GM10248 (cell line): ENCODE measurements at regions of chr20 and their contacts with region 1.

Region 1: DNA sequence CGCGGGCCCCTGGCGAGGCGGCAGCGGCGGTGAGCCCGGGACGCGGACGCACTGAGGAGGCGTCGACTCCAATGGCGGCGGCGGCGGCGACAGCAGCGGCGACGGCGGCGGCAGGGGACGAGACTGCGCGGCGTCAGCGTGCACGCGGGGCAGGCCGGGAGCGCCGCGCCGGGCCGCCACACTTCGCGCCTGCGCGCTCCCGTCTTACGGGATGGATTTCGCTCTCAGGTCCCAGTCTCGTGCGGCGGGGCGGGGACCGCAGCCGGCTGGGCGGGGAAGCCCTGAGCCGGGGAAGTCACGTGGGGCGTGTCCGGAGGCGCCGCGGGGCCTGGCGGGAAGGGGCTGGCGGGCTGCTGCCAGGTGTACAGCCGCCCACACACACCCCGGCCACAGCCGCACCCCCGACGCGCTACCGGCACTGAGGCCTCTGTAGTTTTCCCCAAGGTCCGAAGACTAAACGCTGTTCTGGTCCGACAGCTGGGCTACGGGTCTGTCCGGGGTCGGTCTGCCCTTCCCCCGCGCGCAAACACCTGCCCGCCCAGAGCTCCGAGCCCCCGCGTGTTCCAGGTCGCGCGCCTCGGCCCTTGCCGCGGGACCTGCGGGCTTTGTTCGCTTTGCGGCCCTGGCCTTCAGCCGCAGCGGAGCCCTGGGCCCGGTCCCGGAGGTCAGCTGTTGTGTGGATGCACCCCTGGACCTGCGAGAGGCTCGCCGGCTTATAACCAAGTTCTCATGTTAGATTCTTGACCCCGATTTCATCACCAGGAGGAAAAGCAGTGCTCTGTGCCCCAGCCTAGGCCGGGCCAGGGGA is at the start of gene YTHDF1:
- DNase-seq: peak; percentile 100
- CTCF ChIP-seq: no peak

Region 2: DNA sequence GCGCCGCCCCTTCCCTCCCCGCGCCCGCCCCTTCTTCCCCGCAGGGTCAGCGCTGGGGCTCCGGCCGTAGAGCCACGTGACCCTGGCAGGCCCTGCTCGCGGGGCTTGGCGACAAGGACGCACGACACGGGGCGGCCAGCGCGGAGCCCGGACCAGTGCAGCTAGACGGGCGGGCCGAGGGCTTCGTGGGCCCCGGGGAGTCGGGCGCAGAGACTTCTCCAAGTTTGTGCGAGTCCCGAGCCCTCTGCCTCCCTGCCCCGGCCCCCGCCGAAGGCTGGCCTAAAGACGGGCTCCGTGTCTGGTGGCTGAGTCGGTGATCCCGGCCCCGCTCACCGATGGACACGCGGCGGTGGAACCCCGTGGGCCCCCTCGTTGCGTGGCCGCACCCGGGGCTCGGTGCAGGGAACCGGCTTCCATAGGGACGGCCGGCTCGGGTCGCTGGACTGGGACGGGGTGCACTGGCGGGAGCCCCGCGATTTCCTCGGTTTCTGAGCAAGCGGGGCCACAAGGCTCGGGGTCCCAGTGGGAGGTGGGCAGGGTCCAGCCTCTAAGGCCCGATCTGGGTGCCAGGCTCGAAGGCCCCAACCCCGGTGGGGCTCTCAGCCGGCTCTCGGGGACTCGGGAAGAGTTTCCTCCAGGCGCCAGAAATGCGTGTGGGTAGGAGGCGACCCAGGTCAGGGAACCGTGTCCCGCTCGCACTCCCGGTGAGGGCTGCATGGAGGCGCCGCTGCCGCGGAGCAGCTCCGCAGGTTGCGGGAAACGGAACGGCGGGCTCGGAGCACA is 740.0 kb before region 1 on chr20:
- CTCF ChIA-PET with region 1: no interaction called
- POLR2A ChIA-PET with region 1: no interaction called
- DNase-seq: no peak
- CTCF ChIP-seq: no peak

Region 3: GRCh38 chr20:63009045-63009961 is 206.9 kb before region 1 on chr20:
- CTCF ChIA-PET with region 1: no interaction called
- POLR2A ChIA-PET with region 1: no interaction called
- DNase-seq: peak; percentile 95
- CTCF ChIP-seq: peak; percentile 99

Region 4: GRCh38 chr20:63196768-63197470 is 19.3 kb before region 1 on chr20:
- CTCF ChIA-PET with region 1: interaction called, 12 read pairs
- POLR2A ChIA-PET with region 1: no interaction called
- DNase-seq: no peak
- CTCF ChIP-seq: no peak